CD4-positive, alpha-beta T cell (primary cell): ENCODE measurements at regions of chr12 and their contacts with region 1.

Region 1: GRCh38 chr12:86860776-86861175 is 604.6 kb upstream of the MGAT4C start:
- DNase-seq: no peak
- ATAC-seq: no peak
- H3K4me3 ChIP-seq: no peak overlapping the region
- H3K4me3 Mint-ChIP-seq: no peak overlapping the region
- H3K27ac ChIP-seq: no peak overlapping the region
- H3K27ac Mint-ChIP-seq: no peak overlapping the region
- H3K4me1 ChIP-seq: no peaks in the 10 kb centered on the region
- H3K4me1 Mint-ChIP-seq: no peaks in the 10 kb centered on the region
- H3K27me3 ChIP-seq: no peaks in the 10 kb centered on the region
- H3K27me3 Mint-ChIP-seq: no peaks in the 10 kb centered on the region
- CTCF ChIP-seq: no peak

Region 2: GRCh38 chr12:86826051-86826450 is 34.7 kb before region 1 on chr12:
- CTCF ChIA-PET with region 1: no interaction called
- POLR2A ChIA-PET with region 1: no interaction called
- intact Hi-C with region 1: no loop called
- DNase-seq: no peak
- ATAC-seq: no peak
- H3K4me3 ChIP-seq: no peak overlapping the region
- H3K4me3 Mint-ChIP-seq: no peak overlapping the region
- H3K27ac ChIP-seq: no peak overlapping the region
- H3K27ac Mint-ChIP-seq: no peak overlapping the region
- H3K4me1 ChIP-seq: no peaks in the 10 kb centered on the region
- H3K4me1 Mint-ChIP-seq: no peaks in the 10 kb centered on the region
- H3K27me3 ChIP-seq: no peaks in the 10 kb centered on the region
- H3K27me3 Mint-ChIP-seq: no peaks in the 10 kb centered on the region
- CTCF ChIP-seq: no peak

Region 3: GRCh38 chr12:86838711-86839110 is 22.1 kb before region 1 on chr12:
- CTCF ChIA-PET with region 1: no interaction called
- POLR2A ChIA-PET with region 1: no interaction called
- intact Hi-C with region 1: loop called in 1 of 2 experiments (anchors 2 kb)
- DNase-seq: no peak
- ATAC-seq: no peak
- H3K4me3 ChIP-seq: no peak overlapping the region
- H3K4me3 Mint-ChIP-seq: no peak overlapping the region
- H3K27ac ChIP-seq: no peak overlapping the region
- H3K27ac Mint-ChIP-seq: no peak overlapping the region
- H3K4me1 ChIP-seq: no peaks in the 10 kb centered on the region
- H3K4me1 Mint-ChIP-seq: no peaks in the 10 kb centered on the region
- H3K27me3 ChIP-seq: no peaks in the 10 kb centered on the region
- H3K27me3 Mint-ChIP-seq: no peaks in the 10 kb centered on the region
- CTCF ChIP-seq: no peak